B cell (primary cell): ENCODE measurements at regions of chr20 and their contacts with region 1.

Region 1: DNA sequence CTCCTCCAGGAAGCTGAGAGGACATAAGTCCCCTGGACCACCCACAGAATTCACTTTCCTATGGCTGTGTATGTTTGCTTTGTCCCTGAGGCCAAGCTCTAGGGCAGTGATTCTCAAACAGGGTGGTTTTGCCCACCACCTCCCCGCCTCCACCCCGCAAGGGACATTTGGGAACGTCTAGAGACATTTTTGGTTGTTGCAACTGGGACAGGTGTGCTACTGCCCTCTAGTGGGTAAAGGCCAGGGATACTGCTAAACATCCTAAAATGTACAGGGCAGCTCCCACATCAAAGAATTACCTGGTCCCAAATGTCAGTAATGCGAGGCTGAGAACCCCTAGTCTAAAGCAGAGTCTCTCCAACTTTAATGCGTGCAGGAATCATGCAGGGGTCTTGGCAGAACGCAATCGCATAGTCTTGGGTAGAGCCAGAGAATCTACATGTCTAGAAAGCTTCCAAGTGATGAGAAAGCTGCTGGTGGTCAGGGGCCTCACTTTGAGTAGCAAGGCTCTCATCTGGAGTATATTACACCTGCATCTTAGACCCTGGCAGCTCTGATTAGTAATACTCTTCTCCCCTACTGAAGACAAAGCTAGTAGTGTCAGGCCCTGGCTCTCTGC is 5.1 kb downstream of the KCNS1 start:
- DNase-seq: peak; percentile 78
- ATAC-seq: peak; percentile 56
- H3K4me3 ChIP-seq: no peak overlapping the region
- H3K4me3 Mint-ChIP-seq: peak overlapping the region; percentile 19
- H3K27ac ChIP-seq: no peak overlapping the region
- H3K27ac Mint-ChIP-seq: no peak overlapping the region
- H3K4me1 ChIP-seq: peaks cover 21% of the 10 kb centered on the region in 2 donors
- H3K4me1 Mint-ChIP-seq: peaks cover 15% of the 10 kb centered on the region
- H3K27me3 ChIP-seq: peaks cover 0 to 44% (median 26%) of the 10 kb centered on the region in 4 experiments
- H3K27me3 Mint-ChIP-seq: peaks cover 31% of the 10 kb centered on the region
- CTCF ChIP-seq: peak; percentile 85

Region 2: DNA sequence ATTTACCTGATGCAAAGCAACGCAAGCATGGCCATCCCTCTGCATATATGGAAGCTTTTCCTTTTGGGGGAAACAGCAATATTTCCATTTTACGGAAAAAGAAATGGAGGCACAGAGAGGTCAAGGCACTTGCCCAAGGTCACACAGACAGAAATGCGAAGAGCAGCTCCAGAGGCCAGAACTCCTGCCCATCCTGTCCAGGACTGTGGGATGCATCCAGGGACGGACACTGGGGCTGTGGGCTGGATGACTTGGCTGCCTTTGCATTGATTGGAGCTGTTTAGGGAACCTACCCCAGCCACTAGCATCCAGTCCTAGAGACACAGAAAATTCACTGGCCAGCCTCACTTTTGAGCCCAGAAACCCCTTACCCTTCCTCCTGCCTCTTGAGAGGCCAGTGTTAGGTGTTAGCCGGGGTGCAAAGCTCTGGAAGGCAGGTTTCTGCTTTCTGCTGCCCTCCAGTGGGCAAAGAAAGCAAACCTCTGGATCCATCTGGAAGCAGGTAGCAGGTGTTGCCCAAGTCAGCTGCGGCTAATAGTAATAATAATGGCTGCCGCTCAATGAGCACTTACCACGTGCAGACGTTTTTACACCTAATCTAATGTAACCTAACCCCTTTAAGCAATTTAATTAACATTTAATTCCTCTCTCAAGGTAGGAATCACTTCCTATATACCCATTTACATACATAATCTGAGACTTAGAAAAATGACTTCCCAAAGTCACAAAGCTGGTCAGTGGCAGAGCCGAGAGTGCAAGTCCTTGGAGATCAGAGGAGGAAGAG is 412.4 kb before region 1 on chr20:
- CTCF ChIA-PET with region 1: interaction called, 13 read pairs
- POLR2A ChIA-PET with region 1: no interaction called
- intact Hi-C with region 1: no loop called
- DNase-seq: peak; percentile 71
- ATAC-seq: peak; percentile 47
- H3K4me3 ChIP-seq: no peak overlapping the region
- H3K4me3 Mint-ChIP-seq: no peak overlapping the region
- H3K27ac ChIP-seq: no peak overlapping the region
- H3K27ac Mint-ChIP-seq: no peak overlapping the region
- H3K4me1 ChIP-seq: peaks cover 0 to 11% of the 10 kb centered on the region in 2 donors
- H3K4me1 Mint-ChIP-seq: peaks cover 5% of the 10 kb centered on the region
- H3K27me3 ChIP-seq: peaks cover 0 to 3% (median 0%) of the 10 kb centered on the region in 4 experiments
- H3K27me3 Mint-ChIP-seq: peaks cover 10% of the 10 kb centered on the region
- CTCF ChIP-seq: peak; percentile 38

Region 3: DNA sequence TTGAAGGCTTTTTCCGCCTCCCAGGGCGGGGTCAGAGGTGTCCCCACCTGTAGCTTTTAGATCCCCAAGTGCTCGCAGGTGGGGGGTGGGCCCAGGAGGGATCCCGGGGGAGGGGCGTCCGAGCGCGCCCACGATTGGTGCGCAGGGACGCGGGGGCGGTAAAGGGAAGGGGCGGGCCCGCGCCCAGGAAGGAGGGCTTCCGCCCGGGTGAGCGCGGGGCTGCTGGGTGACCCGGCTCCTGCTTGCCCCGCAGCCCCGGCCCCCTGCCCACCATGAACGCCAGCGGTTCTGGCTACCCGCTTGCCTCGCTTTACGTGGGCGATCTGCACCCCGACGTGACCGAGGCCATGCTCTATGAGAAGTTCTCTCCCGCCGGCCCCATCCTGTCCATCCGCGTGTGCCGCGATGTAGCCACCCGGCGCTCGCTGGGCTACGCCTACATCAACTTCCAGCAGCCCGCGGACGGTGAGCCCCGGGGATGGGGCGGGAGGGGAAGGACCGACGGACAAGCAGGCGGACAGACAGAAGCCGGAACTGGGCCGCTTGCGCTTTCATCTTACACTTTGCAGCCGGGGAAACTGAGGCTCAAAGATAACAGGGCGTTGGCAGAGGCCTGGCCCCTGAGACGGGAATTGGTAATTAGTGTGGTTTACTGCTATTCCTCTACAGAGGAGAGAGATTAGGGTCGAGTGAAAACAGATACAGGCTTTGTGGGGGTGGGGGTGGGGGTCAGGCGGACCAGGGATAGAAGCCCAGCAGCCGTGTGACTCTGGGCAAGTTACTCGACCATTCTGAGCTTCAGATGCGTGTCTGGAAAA is 185.8 kb before region 1 on chr20 and contains the start of gene PABPC1L:
- CTCF ChIA-PET with region 1: interaction called, 5 read pairs
- POLR2A ChIA-PET with region 1: no interaction called
- intact Hi-C with region 1: loop called (anchors 2 kb)
- DNase-seq: peak; percentile 84
- ATAC-seq: peak; percentile 98
- H3K4me3 ChIP-seq: peak within 1 kb of the TSS; percentile 50 to 85 (median 81)
- H3K4me3 Mint-ChIP-seq: peak within 1 kb of the TSS; percentile 91
- H3K27ac ChIP-seq: peak within 1 kb of the TSS in 1 of 2 donors; percentile 65
- H3K27ac Mint-ChIP-seq: peak within 1 kb of the TSS; percentile 65
- H3K4me1 ChIP-seq: peaks cover 13 to 18% of the 10 kb centered on the region in 2 donors
- H3K4me1 Mint-ChIP-seq: peaks cover 24% of the 10 kb centered on the region
- H3K27me3 ChIP-seq: no peaks in the 10 kb centered on the region
- H3K27me3 Mint-ChIP-seq: no peaks in the 10 kb centered on the region
- CTCF ChIP-seq: no peak
- total RNA-seq, gene PABPC1L: 100 and 105 TPM in 2 replicates

Region 4: DNA sequence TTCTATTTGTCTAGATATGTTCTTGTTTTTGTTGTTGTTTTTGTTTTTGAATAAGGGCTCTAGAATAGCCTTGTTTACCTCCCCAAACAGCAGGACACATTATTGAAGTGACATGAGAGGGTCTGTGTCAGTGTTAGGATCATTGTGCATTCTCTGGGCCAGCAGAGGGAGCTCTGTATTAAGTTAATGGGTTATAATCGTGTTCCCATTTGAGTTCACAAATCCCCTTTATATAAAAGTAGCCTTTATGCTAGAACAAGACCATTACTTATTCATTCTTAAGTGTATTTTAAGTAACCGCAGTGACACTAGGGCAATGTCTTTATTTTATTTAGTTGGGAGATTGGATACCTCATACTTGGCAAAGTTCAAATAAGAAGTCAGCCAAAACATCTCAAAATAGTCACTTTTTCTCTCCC is 84.7 kb before region 1 on chr20:
- CTCF ChIA-PET with region 1: interaction called, 57 read pairs
- POLR2A ChIA-PET with region 1: no interaction called
- intact Hi-C with region 1: loop called (anchors 1 kb)
- DNase-seq: peak; percentile 65
- ATAC-seq: peak; percentile 58
- H3K4me3 ChIP-seq: no peak overlapping the region
- H3K4me3 Mint-ChIP-seq: no peak overlapping the region
- H3K27ac ChIP-seq: peak overlapping the region in 1 of 2 donors; percentile 59
- H3K27ac Mint-ChIP-seq: no peak overlapping the region
- H3K4me1 ChIP-seq: no peaks in the 10 kb centered on the region
- H3K4me1 Mint-ChIP-seq: peaks cover 25% of the 10 kb centered on the region
- H3K27me3 ChIP-seq: no peaks in the 10 kb centered on the region
- H3K27me3 Mint-ChIP-seq: no peaks in the 10 kb centered on the region
- CTCF ChIP-seq: peak; percentile 76

Region 5: GRCh38 chr20:45044084-45044573 is 51.7 kb before region 1 on chr20:
- CTCF ChIA-PET with region 1: interaction called, 134 read pairs
- POLR2A ChIA-PET with region 1: interaction called, 3 read pairs
- intact Hi-C with region 1: loop called (anchors 1 kb)
- DNase-seq: peak; percentile 80
- ATAC-seq: peak; percentile 85
- H3K4me3 ChIP-seq: no peak overlapping the region
- H3K4me3 Mint-ChIP-seq: no peak overlapping the region
- H3K27ac ChIP-seq: peak overlapping the region in 1 of 2 donors; percentile 42
- H3K27ac Mint-ChIP-seq: peak overlapping the region; percentile 16
- H3K4me1 ChIP-seq: peaks cover 17 to 18% of the 10 kb centered on the region in 2 donors
- H3K4me1 Mint-ChIP-seq: peaks cover 66% of the 10 kb centered on the region
- H3K27me3 ChIP-seq: no peaks in the 10 kb centered on the region
- H3K27me3 Mint-ChIP-seq: no peaks in the 10 kb centered on the region
- CTCF ChIP-seq: peak; percentile 93

Region 6: DNA sequence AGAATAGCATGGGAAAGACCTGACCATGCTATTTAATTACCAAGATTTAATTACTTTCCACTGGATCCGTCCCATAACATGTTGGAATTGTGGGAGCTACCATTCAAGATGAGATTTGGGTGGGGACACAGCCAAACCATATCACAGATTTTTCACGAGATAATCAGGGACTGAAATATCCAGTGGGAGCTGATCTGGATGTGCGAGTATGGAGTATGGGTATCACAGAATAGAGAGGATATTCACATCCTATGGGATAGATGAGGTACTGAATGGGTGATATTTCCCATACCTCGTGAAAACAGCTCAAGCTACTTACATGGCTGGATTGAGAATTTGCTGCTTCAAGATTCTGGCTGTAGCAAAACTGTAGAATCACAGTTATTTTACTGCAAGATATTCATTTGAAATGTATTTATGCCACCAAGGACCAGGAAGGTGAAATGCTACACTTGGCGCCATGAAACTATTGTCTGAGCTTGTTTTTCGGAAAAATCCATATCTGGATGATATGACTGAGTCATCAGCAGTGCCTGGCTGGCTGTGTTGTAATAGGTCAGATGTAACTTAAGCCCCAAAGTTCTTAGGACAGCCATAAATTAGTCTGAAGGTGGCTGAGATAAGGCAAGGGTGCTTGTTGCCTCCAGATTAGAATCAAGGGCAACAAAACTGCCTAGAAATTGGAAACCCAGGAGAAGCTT is 24.8 kb before region 1 on chr20:
- CTCF ChIA-PET with region 1: interaction called, 15 read pairs
- POLR2A ChIA-PET with region 1: no interaction called
- intact Hi-C with region 1: no loop called
- DNase-seq: no peak
- ATAC-seq: no peak
- H3K4me3 ChIP-seq: no peak overlapping the region
- H3K4me3 Mint-ChIP-seq: no peak overlapping the region
- H3K27ac ChIP-seq: peak overlapping the region in 1 of 2 donors; percentile 34
- H3K27ac Mint-ChIP-seq: no peak overlapping the region
- H3K4me1 ChIP-seq: no peaks in the 10 kb centered on the region
- H3K4me1 Mint-ChIP-seq: peaks cover 31% of the 10 kb centered on the region
- H3K27me3 ChIP-seq: no peaks in the 10 kb centered on the region
- H3K27me3 Mint-ChIP-seq: no peaks in the 10 kb centered on the region
- CTCF ChIP-seq: no peak

Region 7: GRCh38 chr20:45293041-45294002 is 197.5 kb after region 1 on chr20:
- CTCF ChIA-PET with region 1: interaction called, 10 read pairs
- POLR2A ChIA-PET with region 1: no interaction called
- intact Hi-C with region 1: no loop called
- DNase-seq: peak; percentile 85
- ATAC-seq: peak; percentile 86
- H3K4me3 ChIP-seq: peak overlapping the region in 4 of 5 experiments; percentile 39 to 65 (median 60)
- H3K4me3 Mint-ChIP-seq: peak overlapping the region; percentile 87
- H3K27ac ChIP-seq: no peak overlapping the region
- H3K27ac Mint-ChIP-seq: no peak overlapping the region
- H3K4me1 ChIP-seq: peaks cover 13 to 21% of the 10 kb centered on the region in 2 donors
- H3K4me1 Mint-ChIP-seq: peaks cover 18% of the 10 kb centered on the region
- H3K27me3 ChIP-seq: peaks cover 0 to 42% (median 20%) of the 10 kb centered on the region in 4 experiments
- H3K27me3 Mint-ChIP-seq: peaks cover 41% of the 10 kb centered on the region
- CTCF ChIP-seq: peak; percentile 96

Region 8: GRCh38 chr20:45636513-45636912 is 540.7 kb after region 1 on chr20:
- CTCF ChIA-PET with region 1: no interaction called
- POLR2A ChIA-PET with region 1: no interaction called
- intact Hi-C with region 1: no loop called
- DNase-seq: no peak
- ATAC-seq: no peak
- H3K4me3 ChIP-seq: no peak overlapping the region
- H3K4me3 Mint-ChIP-seq: no peak overlapping the region
- H3K27ac ChIP-seq: no peak overlapping the region
- H3K27ac Mint-ChIP-seq: no peak overlapping the region
- H3K4me1 ChIP-seq: no peaks in the 10 kb centered on the region
- H3K4me1 Mint-ChIP-seq: no peaks in the 10 kb centered on the region
- H3K27me3 ChIP-seq: no peaks in the 10 kb centered on the region
- H3K27me3 Mint-ChIP-seq: peaks cover 28% of the 10 kb centered on the region
- CTCF ChIP-seq: no peak